RWPE1 (cell line): ENCODE measurements at regions of chr19 and their contacts with region 1.

Region 1: DNA sequence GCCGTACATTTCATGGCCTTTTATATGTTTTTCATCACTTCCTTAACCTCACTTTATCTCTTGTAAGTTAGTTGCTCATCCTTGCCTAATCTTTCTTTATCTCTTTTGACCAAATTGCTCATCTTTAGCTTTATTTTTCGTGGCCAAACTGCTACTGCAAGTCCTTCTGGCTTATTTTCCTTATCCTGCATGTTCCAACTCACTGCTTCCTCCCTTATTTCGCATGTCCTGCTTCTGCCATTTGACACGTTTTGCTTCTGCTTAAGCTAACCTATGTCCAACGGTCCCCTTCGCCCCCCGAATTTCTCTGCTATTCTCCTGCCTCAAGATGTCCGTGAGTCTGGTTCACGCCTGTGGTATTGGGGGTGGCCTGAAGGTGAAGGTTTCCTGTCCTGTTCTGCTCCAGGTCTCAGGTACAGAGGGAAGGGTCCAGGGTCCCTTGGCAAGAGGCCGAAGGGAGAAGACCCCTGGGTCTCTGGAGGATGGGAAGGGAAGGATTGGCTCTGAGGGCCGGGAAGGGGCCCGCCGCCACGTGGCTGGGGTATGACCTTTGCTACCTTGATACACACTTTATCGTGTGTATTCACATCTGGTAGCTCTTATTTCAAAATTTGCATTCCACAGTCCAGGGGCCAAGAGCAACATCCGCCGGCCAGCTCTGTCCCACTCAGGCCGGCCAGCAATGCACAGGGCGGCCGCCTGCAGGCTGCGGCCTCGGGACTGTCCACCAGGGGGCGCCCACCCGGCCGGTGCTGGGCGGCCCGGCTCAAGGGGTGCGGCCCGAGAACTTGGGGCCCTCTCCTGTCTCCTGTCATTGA is 2.9 kb upstream of the C19orf85 start:
- DNase-seq: peak; percentile 61
- H3K27ac ChIP-seq: no peak overlapping the region
- CTCF ChIP-seq: peak; percentile 99

Region 2: GRCh38 chr19:55452749-55453346 is 14.6 kb before region 1 on chr19:
- CTCF ChIA-PET with region 1: interaction called, 11 read pairs
- POLR2A ChIA-PET with region 1: no interaction called
- DNase-seq: peak; percentile 73
- H3K27ac ChIP-seq: peak overlapping the region; percentile 46
- CTCF ChIP-seq: no peak

Region 3: DNA sequence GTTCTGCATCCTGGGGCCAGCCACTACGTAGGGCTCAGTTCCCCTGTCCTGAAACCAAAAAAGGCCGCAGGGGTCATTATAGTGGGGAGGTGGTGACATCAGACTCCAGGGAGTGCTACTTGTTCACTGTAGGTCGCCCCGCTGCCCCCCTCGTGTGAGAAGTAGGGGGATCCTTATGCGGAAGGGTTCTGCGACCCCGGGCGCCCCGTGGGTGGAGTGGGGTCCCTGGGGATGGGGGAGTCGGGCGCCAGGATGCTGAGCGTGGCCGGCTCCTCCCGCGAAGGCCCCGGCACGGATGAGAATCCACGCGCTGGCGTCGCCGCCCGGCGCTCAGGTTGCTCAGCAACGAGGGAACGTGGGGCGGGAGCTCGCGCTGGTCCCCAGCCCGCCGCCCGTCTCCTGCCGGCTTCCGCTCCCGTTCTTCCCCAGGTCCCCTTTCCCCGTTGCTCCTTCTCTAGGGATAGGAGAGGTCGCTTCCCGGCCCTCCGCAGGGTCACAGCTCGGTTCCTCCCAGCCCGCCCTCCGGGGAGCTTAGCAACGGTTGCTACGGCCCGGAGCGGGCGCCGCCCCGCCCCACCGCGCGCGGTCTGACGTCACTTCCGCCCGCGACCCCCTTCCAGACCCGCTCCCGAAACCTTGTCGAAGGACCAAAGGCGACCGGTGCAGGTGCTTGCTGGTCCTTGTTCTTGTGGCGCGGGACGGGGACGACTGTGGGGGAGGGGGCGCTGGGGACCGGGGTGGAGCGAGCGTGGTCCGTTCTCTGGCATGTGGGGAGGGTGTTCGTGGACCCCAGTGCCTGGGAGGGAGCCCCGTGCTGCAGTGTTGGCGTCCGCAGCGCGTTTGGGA is 17.4 kb after region 1 on chr19 and contains the start of gene NAT14:
- CTCF ChIA-PET with region 1: interaction called, 10 read pairs
- POLR2A ChIA-PET with region 1: no interaction called
- DNase-seq: peak; percentile 72
- H3K27ac ChIP-seq: peak within 1 kb of the TSS; percentile 99
- CTCF ChIP-seq: no peak

Region 4: DNA sequence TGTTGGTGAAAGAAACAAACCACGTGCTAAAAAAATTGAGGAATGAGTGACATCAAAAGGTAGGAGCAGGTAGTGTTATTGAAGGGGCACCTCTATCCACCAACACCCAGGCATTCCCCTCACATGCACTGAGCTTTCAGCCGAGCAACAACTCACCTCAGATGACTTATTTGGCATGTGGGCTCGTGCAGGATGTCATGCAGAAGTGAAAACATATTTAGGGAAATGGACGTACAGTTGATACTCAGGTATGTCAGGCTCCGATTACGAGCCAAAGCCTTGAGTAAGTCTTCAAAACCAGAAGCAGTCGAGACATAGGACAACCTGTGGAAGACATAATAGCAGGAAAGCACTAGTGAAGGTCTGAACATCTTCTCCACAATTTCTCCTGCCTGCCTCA is 334.0 kb after region 1 on chr19:
- CTCF ChIA-PET with region 1: no interaction called
- POLR2A ChIA-PET with region 1: no interaction called
- DNase-seq: no peak
- H3K27ac ChIP-seq: no peak overlapping the region
- CTCF ChIP-seq: no peak